Activated CD4-positive, alpha-beta T cell treated with anti-CD3 and anti-CD28 coated beads, Interleukin-2, amount 10 ng/mL, durations not matched to agents 7 days and 5 days (primary cell): ENCODE measurements at regions of chr17 and their contacts with region 1.

Region 1: DNA sequence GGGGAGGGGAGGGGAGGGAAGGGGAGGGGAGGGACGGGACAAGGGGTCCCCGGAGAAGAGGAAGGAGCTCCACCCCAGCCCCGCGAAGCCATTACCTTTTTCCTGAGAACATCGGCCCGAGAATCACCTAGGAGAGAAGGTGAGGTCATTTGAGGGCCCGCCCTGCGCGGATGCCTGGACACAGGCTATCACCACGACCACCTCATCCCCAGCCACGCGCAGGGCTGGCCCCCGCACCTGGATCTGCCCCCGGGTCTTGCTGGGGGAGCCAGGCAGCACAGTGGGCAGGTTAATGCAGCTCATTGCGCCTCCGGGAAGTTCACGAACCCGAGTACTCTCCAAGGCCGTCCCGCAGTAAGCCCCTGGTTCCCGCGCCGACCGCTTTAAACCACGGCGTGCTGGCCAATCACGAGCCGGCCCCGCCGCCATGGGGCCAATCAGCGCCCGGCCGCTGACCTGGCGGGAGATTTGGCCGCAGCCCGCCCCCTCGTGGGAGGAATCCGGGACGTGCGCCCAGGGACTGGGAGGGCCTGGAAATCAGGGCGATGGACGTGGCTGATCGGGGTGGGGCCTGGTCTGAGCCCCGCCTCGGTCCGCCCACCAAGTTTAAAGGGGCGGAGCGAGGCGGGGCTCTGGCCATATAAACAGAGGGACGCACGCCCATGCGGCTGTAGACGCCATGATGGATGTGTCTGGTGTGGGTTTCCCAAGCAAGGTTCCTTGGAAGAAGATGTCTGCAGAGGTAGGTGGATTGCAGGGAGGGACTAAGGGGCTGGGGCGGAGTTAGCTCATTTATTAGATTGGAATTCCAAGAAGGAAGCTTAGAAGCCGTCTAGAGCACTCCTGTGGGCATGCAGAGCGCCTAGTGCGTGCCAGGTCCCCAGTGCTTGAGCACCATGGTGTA is at the starts of genes AFMID and TK1:
- DNase-seq: peak; percentile 92
- H3K4me3 Mint-ChIP-seq: peak within 1 kb of the TSS; percentile 78
- H3K27ac Mint-ChIP-seq: peak within 1 kb of the TSS; percentile 88
- H3K4me1 Mint-ChIP-seq: peaks cover 45% of the 10 kb centered on the region
- H3K27me3 Mint-ChIP-seq: no peaks in the 10 kb centered on the region
- total RNA-seq, gene AFMID: 16.8 to 17.0 TPM
- total RNA-seq, gene TK1: 121 to 136 TPM

Region 2: DNA sequence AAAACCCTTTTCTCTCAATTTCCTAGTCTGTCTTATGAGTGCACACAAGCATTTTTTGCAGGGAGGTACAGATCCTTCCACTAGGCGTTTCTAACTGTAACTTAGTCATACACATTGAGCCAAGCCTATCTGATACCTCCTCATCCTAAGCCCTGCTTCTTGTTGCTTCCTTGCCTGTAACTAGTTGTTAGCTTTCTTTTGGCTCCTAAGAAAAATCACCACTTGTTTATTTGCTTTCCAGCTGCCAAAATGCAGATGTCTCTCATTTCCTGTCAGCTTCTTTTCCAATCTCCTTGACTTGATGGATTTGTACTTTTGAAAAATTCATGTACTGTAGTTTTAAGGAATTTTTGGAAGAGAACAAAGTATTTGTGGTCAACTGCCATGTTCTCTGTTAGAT is 154.8 kb before region 1 on chr17:
- CTCF ChIA-PET with region 1: no interaction called
- POLR2A ChIA-PET with region 1: interaction called, 10 read pairs
- DNase-seq: no peak
- H3K4me3 Mint-ChIP-seq: no peak overlapping the region
- H3K27ac Mint-ChIP-seq: no peak overlapping the region
- H3K4me1 Mint-ChIP-seq: peaks cover 15% of the 10 kb centered on the region
- H3K27me3 Mint-ChIP-seq: no peaks in the 10 kb centered on the region